CD8-positive, alpha-beta T cell (primary cell): ENCODE measurements at regions of chr22 and their contacts with region 1.

Region 1: GRCh38 chr22:28009272-28009827 is 90.3 kb upstream of the PITPNB start:
- DNase-seq: peak; percentile 46 to 81 (median 71)
- ATAC-seq: peak; percentile 71
- H3K4me3 ChIP-seq: no peak overlapping the region
- H3K4me3 Mint-ChIP-seq: no peak overlapping the region
- H3K27ac ChIP-seq: no peak overlapping the region
- H3K27ac Mint-ChIP-seq: no peak overlapping the region
- H3K4me1 ChIP-seq: no peaks in the 10 kb centered on the region
- H3K4me1 Mint-ChIP-seq: no peaks in the 10 kb centered on the region
- H3K27me3 ChIP-seq: no peaks in the 10 kb centered on the region
- H3K27me3 Mint-ChIP-seq: no peaks in the 10 kb centered on the region
- CTCF ChIP-seq: peak; percentile 92

Region 2: GRCh38 chr22:26679003-26679629 is 1330.2 kb before region 1 on chr22:
- CTCF ChIA-PET with region 1: no interaction called
- POLR2A ChIA-PET with region 1: no interaction called
- intact Hi-C with region 1: loop called in 1 of 2 experiments (anchors 1 kb)
- DNase-seq: peak; percentile 37 to 80 (median 70)
- ATAC-seq: peak; percentile 89
- H3K4me3 ChIP-seq: no peak overlapping the region
- H3K4me3 Mint-ChIP-seq: no peak overlapping the region
- H3K27ac ChIP-seq: no peak overlapping the region
- H3K27ac Mint-ChIP-seq: peak overlapping the region; percentile 76
- H3K4me1 ChIP-seq: peaks cover 46% of the 10 kb centered on the region
- H3K4me1 Mint-ChIP-seq: peaks cover 67% of the 10 kb centered on the region
- H3K27me3 ChIP-seq: no peaks in the 10 kb centered on the region
- H3K27me3 Mint-ChIP-seq: no peaks in the 10 kb centered on the region
- CTCF ChIP-seq: peak; percentile 97

Region 3: GRCh38 chr22:28029201-28029948 is 20.0 kb after region 1 on chr22:
- CTCF ChIA-PET with region 1: no interaction called
- POLR2A ChIA-PET with region 1: no interaction called
- intact Hi-C with region 1: no loop called
- DNase-seq: no peak
- ATAC-seq: no peak
- H3K4me3 ChIP-seq: no peak overlapping the region
- H3K4me3 Mint-ChIP-seq: no peak overlapping the region
- H3K27ac ChIP-seq: no peak overlapping the region
- H3K27ac Mint-ChIP-seq: no peak overlapping the region
- H3K4me1 ChIP-seq: no peaks in the 10 kb centered on the region
- H3K4me1 Mint-ChIP-seq: no peaks in the 10 kb centered on the region
- H3K27me3 ChIP-seq: no peaks in the 10 kb centered on the region
- H3K27me3 Mint-ChIP-seq: peaks cover 2% of the 10 kb centered on the region
- CTCF ChIP-seq: no peak

Region 4: DNA sequence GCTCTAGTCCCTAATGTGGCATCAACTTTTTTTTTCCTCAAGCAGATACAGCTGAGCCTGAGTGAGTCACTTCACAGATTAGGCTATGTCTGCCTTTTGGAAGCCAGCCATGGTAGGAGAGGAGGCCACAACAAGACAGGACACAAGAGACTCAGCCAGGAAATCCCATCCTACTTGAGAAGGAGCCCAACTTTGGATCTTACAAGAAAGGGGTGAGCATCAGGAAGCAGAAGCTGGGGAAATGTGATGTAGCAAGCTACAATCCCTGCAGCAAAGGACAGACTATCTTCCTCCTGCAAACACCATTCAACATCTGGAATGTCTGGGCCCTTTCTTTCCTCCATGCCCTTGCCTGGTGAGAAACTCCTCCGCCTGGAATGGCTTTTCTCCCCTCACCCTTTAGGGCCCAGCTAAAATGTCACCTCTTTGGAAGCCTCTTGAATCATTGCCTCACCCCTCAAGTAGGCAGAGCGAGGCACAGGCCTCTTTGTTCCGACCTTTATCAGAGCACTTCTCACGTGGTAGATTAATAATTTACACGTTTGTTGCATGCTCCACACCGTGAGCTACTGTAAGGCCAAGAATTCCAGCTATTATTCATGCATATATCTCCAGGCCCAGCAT is 66.1 kb after region 1 on chr22:
- CTCF ChIA-PET with region 1: no interaction called
- POLR2A ChIA-PET with region 1: no interaction called
- intact Hi-C with region 1: loop called in 1 of 2 experiments (anchors 2 kb)
- DNase-seq: no peak
- ATAC-seq: no peak
- H3K4me3 ChIP-seq: no peak overlapping the region
- H3K4me3 Mint-ChIP-seq: no peak overlapping the region
- H3K27ac ChIP-seq: no peak overlapping the region
- H3K27ac Mint-ChIP-seq: no peak overlapping the region
- H3K4me1 ChIP-seq: no peaks in the 10 kb centered on the region
- H3K4me1 Mint-ChIP-seq: no peaks in the 10 kb centered on the region
- H3K27me3 ChIP-seq: no peaks in the 10 kb centered on the region
- H3K27me3 Mint-ChIP-seq: no peaks in the 10 kb centered on the region
- CTCF ChIP-seq: no peak